ENCODE measurements at regions of chr6 and their contacts with region 1.

Region 1: DNA sequence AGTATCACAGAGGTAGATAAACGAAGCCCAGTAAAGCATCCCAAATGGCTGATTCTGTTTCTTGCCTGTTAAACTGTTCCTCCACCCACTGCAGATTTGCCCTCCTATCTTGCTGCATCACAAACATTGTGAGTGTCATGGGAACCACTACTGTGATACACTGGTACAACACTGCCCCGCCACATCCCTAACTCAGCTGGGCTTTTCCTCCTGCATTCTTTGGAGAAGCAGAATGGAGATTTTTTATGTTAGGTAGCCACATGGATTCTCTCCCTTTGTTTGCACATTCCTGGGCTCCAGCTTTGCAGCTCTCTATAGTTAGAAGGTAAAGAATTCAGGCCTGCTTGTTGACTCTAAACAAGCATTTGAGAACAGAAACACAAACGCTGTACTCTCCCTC is 234.1 kb downstream of the TMEM242 start:
- DNase-seq: peak in 1 of 2 experiments; percentile 49
- H3K4me3 ChIP-seq: peak overlapping the region in 1 of 4 experiments; percentile 36; a peak in 1 of 8 replicates
- H3K27ac ChIP-seq: peak overlapping the region; percentile 69
- H3K4me1 ChIP-seq: peaks cover 9 to 28% (median 26%) of the 10 kb centered on the region in 4 experiments
- H3K27me3 ChIP-seq: no peaks in the 10 kb centered on the region
- CTCF ChIP-seq: no peak
- EP300 ChIP-seq: peak; percentile 9 to 83; a peak in 2 of 3 replicates
- POLR2A ChIP-seq: no peak
- RAD21 ChIP-seq: no peak

Region 2: GRCh38 chr6:156963712-156964700 is 125.3 kb before region 1 on chr6:
- CTCF ChIA-PET with region 1: no interaction called
- POLR2A ChIA-PET with region 1: no interaction called
- DNase-seq: no peak
- H3K4me3 ChIP-seq: no peak overlapping the region
- H3K27ac ChIP-seq: no peak overlapping the region
- H3K4me1 ChIP-seq: peaks cover 9 to 17% (median 13%) of the 10 kb centered on the region in 4 experiments
- H3K27me3 ChIP-seq: no peaks in the 10 kb centered on the region
- CTCF ChIP-seq: no peak
- EP300 ChIP-seq: no peak
- POLR2A ChIP-seq: no peak
- RAD21 ChIP-seq: no peak

Region 3: DNA sequence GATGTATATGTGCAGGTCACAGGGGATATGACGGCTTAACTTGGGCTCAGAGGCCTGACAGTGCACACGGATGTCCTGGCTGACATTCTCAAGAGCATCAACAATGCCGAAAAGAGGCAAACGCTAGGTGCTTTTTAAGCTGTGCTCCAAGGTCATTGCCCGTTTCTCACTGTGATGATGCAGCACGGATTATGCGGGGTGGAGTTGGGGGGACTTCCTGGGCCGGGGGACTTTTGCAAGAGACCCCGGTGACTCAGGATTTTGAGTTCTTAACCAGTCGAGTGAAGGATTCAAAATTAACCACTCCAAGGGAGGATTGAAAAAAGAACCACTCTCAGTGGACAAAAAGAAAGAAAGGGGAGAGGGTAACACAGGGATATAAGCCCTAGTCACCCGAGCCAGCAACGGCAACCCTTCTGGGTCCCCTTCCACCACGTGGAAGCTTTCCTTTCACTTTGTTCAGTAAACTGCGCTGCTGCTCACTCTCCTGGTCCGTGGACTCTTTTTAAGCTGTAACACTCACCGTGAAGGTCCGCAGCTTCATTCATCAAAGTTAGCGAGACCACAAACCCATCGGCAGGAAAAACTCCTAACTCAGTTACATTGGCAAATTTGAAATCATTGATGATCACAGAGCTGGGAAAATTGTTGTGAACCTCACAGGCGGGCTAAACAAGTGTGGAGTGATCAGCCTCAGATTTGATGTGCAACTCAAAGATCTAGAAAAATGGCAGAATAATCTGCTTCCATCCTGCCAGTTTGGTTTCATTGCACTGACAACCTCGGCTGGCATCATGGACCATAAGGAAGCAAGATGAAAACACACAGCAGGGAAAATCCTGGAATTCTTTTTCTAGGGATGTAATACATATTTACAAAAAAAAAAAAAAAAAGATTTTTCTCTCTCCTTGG is 112.8 kb before region 1 on chr6:
- CTCF ChIA-PET with region 1: no interaction called
- POLR2A ChIA-PET with region 1: no interaction called
- DNase-seq: no peak
- H3K4me3 ChIP-seq: no peak overlapping the region
- H3K27ac ChIP-seq: peak overlapping the region; percentile 20; the same call in 1 of the 2 replicates
- H3K4me1 ChIP-seq: peaks cover 0 to 14% (median 13%) of the 10 kb centered on the region in 4 experiments; a peak in 6 of 7 replicates
- H3K27me3 ChIP-seq: no peaks in the 10 kb centered on the region
- CTCF ChIP-seq: no peak
- EP300 ChIP-seq: no peak
- POLR2A ChIP-seq: no peak
- RAD21 ChIP-seq: no peak

Region 4: GRCh38 chr6:157034436-157035230 is 54.6 kb before region 1 on chr6:
- CTCF ChIA-PET with region 1: interaction called, 14 read pairs
- POLR2A ChIA-PET with region 1: no interaction called
- DNase-seq: no peak
- H3K4me3 ChIP-seq: no peak overlapping the region
- H3K27ac ChIP-seq: no peak overlapping the region
- H3K4me1 ChIP-seq: peaks cover 8 to 22% (median 15%) of the 10 kb centered on the region in 4 experiments
- H3K27me3 ChIP-seq: no peaks in the 10 kb centered on the region
- CTCF ChIP-seq: peak in 2 of 3 experiments; percentile 44 to 56; a peak in 2 of 4 replicates
- EP300 ChIP-seq: no peak
- POLR2A ChIP-seq: no peak
- RAD21 ChIP-seq: peak; percentile 63 to 66

Region 5: DNA sequence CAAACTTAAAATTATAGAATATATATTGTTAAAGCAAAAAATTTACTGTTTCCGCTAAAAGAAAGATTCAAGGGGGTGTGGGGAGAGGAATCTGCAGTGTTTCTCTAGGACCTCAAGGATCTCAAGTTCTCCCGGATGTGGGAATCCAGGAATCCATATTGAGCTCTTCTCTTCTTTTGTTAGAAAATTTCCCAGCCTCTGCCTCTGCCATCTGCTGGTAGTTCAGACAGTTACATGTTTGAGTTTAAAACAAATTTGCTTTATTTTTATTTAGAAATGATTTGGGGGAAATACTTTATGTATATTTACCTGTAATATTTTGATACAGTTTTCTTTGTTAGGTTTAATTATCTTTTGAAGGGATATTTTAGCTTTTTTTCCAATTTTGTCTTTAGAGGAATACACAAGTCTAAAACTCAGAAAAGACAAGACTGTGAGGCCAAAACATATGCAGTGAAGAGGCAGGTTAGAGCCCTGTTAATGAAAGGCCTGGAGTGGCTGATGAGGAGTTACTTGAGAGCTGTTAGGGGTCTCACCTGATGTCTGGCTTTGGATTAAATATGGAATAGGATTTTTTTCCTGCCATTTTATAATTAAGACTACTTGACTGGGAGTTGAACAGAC is 43.3 kb before region 1 on chr6:
- CTCF ChIA-PET with region 1: interaction called, 15 read pairs
- POLR2A ChIA-PET with region 1: interaction called, 3 read pairs
- DNase-seq: no peak
- H3K4me3 ChIP-seq: no peak overlapping the region
- H3K27ac ChIP-seq: no peak overlapping the region
- H3K4me1 ChIP-seq: peaks cover 0 to 7% (median 2%) of the 10 kb centered on the region in 4 experiments; a peak in 3 of 7 replicates
- H3K27me3 ChIP-seq: no peaks in the 10 kb centered on the region
- CTCF ChIP-seq: peak in 1 of 3 experiments; percentile 27; a peak in 1 of 4 replicates
- EP300 ChIP-seq: no peak
- POLR2A ChIP-seq: no peak
- RAD21 ChIP-seq: peak; percentile 46 to 50; a peak in 3 of 4 replicates

Region 6: DNA sequence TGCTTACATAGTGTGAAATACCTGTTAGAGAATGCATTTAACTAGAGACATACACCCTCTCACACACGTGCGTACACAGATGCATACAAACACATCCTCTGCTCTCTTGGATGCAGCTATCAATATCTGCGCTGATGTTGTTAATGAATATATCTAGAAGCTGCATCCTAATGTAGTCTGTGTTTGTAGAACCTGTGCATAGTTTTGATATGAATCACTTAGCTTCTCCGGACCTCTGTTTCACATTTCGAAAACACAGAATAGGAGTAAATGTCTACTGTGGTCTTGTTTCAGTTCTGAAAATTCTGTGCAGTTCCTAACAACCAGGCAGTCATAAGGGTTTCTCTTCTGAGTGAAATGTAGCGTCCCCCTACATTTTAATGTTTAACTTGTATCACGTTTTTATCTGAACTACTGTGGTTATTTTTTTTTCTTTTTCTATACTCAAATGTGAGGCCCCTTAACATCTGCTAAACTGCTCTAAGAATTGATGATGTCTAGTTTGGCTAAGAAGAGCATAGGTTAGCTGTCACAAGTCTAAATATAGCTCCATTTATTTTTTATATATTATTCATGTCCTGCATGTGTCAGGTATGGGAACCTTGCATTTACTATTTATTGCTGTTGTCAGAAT is 20.4 kb before region 1 on chr6:
- CTCF ChIA-PET with region 1: interaction called, 6 read pairs
- POLR2A ChIA-PET with region 1: interaction called, 15 read pairs
- DNase-seq: no peak
- H3K4me3 ChIP-seq: no peak overlapping the region
- H3K27ac ChIP-seq: no peak overlapping the region
- H3K4me1 ChIP-seq: peaks cover under 1 to 15% (median 11%) of the 10 kb centered on the region in 4 experiments; a peak in 6 of 7 replicates
- H3K27me3 ChIP-seq: no peaks in the 10 kb centered on the region
- CTCF ChIP-seq: no peak
- EP300 ChIP-seq: no peak
- POLR2A ChIP-seq: no peak
- RAD21 ChIP-seq: no peak

Region 7: GRCh38 chr6:157227202-157228166 is 138.2 kb after region 1 on chr6:
- CTCF ChIA-PET with region 1: no interaction called
- POLR2A ChIA-PET with region 1: no interaction called
- DNase-seq: no peak
- H3K4me3 ChIP-seq: no peak overlapping the region
- H3K27ac ChIP-seq: no peak overlapping the region
- H3K4me1 ChIP-seq: peaks cover 0 to 21% (median 7%) of the 10 kb centered on the region in 4 experiments; a peak in 5 of 7 replicates
- H3K27me3 ChIP-seq: no peaks in the 10 kb centered on the region
- CTCF ChIP-seq: peak in 2 of 3 experiments; percentile 33 to 52; a peak in 2 of 4 replicates
- EP300 ChIP-seq: no peak
- POLR2A ChIP-seq: no peak
- RAD21 ChIP-seq: peak; percentile 37; a peak in 3 of 4 replicates

Region 8: GRCh38 chr6:157486572-157486971 is 397.3 kb after region 1 on chr6:
- CTCF ChIA-PET with region 1: no interaction called
- POLR2A ChIA-PET with region 1: no interaction called
- DNase-seq: no peak
- H3K4me3 ChIP-seq: no peak overlapping the region
- H3K27ac ChIP-seq: no peak overlapping the region
- H3K4me1 ChIP-seq: peaks cover 0 to 11% (median 4%) of the 10 kb centered on the region in 4 experiments; a peak in 5 of 7 replicates
- H3K27me3 ChIP-seq: no peaks in the 10 kb centered on the region
- CTCF ChIP-seq: no peak
- EP300 ChIP-seq: no peak
- POLR2A ChIP-seq: no peak
- RAD21 ChIP-seq: no peak

Measured in H1 (cell line).